GM12878 (cell line): ENCODE measurements at regions of chr1 and their contacts with region 1.

Region 1: GRCh38 chr1:150281837-150282653 is at the start of gene CIART:
- DNase-seq: no peak
- ATAC-seq: peak; percentile 80
- H3K4me3 ChIP-seq: peak within 1 kb of the TSS; percentile 58
- H3K27ac ChIP-seq: no peak within 1 kb of the TSS
- H3K4me1 ChIP-seq: peaks cover 9% of the 10 kb centered on the region
- H3K27me3 ChIP-seq: no peaks in the 10 kb centered on the region; a peak in 2 of 4 replicates
- CTCF ChIP-seq: no peak
- EP300 ChIP-seq: no peak
- POLR2A ChIP-seq: peak; percentile 45; the same call in 1 of the 2 replicates
- RAD21 ChIP-seq: no peak
- polyA plus RNA-seq, gene CIART: 0.61 to 0.62 TPM

Region 2: GRCh38 chr1:150268705-150269403 is 13.2 kb before region 1 on chr1 and contains the start of gene APH1A:
- CTCF ChIA-PET with region 1: interaction called, 27 read pairs
- POLR2A ChIA-PET with region 1: no interaction called
- RAD21 ChIA-PET with region 1: interaction called, 4 read pairs
- SMC1A ChIA-PET with region 1: interaction called, 4 read pairs
- in situ Hi-C with region 1: no loop called
- intact Hi-C with region 1: no loop called
- DNase-seq: peak; percentile 78
- ATAC-seq: peak; percentile 99
- H3K4me3 ChIP-seq: peak within 1 kb of the TSS; percentile 97
- H3K27ac ChIP-seq: peak within 1 kb of the TSS; percentile 90
- H3K4me1 ChIP-seq: peaks cover 12% of the 10 kb centered on the region
- H3K27me3 ChIP-seq: no peaks in the 10 kb centered on the region
- CTCF ChIP-seq: no peak
- EP300 ChIP-seq: no peak
- POLR2A ChIP-seq: peak; percentile 84
- RAD21 ChIP-seq: no peak
- polyA plus RNA-seq, gene APH1A: 6.7 to 13.5 TPM